ENCODE measurements at regions of chr7 and their contacts with region 1.

Region 1: DNA sequence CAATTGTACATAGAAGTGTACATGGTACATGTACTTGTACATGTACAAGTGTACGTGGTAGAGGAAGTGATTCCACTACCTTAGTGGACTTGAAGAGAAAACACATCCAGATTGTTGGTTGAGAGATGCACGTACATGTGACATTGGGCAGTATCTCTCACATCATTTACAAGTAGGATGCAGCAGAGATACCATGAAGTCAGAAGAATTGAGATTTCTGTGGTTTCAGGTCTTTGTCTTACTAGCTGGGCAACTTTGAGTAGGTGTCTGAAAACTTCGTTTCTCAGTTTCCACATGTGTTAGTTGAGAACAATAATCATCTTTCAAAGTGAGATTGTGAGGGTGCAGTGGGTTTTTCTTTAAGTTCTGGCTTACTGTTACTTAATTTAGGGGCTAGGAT is 21.5 kb downstream of the CLDN12 start:
- H3K4me3 Mint-ChIP-seq: no peak overlapping the region
- H3K27ac Mint-ChIP-seq: no peak overlapping the region
- H3K4me1 Mint-ChIP-seq: no peaks in the 10 kb centered on the region
- H3K27me3 Mint-ChIP-seq: no peaks in the 10 kb centered on the region

Region 2: GRCh38 chr7:88789480-88790064 is 1635.1 kb before region 1 on chr7:
- intact Hi-C with region 1: loop called (anchors 5 kb)
- H3K4me3 Mint-ChIP-seq: no peak overlapping the region
- H3K27ac Mint-ChIP-seq: no peak overlapping the region
- H3K4me1 Mint-ChIP-seq: no peaks in the 10 kb centered on the region
- H3K27me3 Mint-ChIP-seq: no peaks in the 10 kb centered on the region

Region 3: DNA sequence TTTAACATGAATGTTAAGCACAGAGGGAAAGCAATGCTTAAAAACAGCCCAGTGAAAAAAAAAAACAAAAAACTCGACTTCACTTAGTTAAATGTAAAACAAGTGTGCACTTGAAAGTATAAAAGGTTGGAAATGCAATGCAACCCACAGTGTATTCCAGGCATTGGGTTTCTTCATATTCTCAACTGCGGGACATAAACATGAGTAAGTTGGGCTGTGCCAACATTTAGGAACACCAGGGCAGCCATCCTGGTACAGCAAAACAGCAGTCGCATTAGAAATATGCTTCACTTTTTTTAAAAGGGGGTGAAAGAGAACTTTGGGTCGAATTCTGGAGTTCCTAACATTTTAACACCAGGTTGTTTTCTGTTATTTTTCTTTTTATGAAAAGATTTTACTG is 269.5 kb before region 1 on chr7:
- intact Hi-C with region 1: loop called (anchors 1 kb)
- H3K4me3 Mint-ChIP-seq: no peak overlapping the region
- H3K27ac Mint-ChIP-seq: no peak overlapping the region
- H3K4me1 Mint-ChIP-seq: peaks cover 10% of the 10 kb centered on the region
- H3K27me3 Mint-ChIP-seq: peaks cover 36% of the 10 kb centered on the region

Region 4: DNA sequence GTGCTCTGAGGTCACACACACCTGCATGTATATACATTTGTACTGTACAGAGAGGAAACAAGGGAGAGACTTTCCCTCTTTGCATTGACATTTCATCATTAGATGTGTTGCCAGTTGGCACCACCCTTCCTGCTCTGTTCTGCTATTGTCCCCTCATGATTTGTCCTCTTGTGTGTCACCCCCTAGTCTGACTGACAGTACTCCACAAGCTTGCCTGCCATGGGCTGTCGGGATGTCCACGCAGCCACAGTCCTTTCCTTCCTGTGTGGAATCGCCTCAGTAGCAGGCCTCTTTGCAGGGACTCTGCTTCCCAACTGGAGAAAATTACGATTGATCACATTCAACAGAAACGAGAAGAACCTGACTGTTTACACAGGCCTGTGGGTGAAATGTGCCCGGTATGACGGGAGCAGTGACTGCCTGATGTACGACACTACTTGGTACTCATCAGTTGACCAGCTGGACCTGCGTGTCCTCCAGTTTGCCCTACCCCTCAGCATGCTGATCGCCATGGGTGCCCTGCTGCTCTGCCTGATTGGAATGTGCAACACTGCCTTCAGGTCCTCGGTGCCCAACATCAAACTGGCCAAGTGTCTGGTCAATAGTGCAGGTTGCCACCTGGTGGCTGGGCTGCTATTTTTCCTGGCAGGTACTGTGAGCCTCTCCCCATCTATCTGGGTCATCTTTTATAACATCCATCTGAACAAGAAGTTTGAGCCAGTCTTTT is 12.1 kb before region 1 on chr7:
- intact Hi-C with region 1: no loop called
- H3K4me3 Mint-ChIP-seq: no peak overlapping the region
- H3K27ac Mint-ChIP-seq: no peak overlapping the region
- H3K4me1 Mint-ChIP-seq: no peaks in the 10 kb centered on the region
- H3K27me3 Mint-ChIP-seq: no peaks in the 10 kb centered on the region

Measured in dendritic cell treated with granulocyte-macrophage colony-stimulating factor and Interleukin-4, amounts not matched to agents 40 ng/mL and 50 ng/mL, for 4 days (primary cell).